ENCODE measurements at regions of chr20 and their contacts with region 1.

Region 1: DNA sequence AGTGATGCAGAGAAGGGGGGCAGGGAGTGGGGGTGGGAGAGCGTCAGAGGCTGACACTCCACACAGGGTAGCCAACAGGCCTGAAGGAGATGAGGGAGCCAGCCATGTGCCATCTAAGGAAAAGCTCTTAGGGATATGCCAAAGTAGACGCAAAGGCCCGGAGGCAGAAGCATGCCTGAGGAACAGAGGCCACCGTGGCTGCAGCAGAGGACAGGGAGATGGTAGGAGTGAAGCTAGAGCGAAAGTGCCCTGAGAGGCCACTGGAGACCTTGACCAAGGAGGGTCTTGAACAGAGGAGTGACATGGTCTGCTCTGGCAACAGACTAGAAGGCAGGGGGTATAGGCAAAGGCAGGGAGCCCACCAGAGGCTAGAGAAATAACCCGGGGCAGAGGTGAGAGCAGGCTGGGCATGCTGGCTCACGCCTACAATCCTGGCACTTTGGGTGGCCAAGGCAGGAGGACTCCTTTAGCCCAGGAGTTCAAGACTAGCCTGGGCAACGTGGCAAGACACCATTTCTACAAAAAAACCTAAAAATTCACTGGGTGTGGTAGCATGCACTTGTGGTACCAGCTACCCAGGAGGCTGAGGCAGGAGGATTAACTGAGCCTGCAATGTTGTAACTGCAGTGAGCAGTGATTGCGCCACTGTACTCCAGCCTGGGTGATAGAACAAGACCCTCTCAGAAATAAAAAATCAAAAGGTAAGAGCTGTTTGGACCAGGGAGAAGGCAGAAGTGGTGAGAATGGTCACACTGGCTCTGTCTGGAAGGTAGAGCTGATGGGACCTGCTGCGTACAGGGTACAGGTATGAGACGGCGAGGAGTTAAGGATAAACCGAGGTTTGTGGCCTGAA is 6.3 kb downstream of the RRBP1 start:
- DNase-seq: no peak
- H3K4me3 ChIP-seq: no peak overlapping the region
- H3K27ac ChIP-seq: no peak overlapping the region
- H3K4me1 ChIP-seq: peaks cover 21% of the 10 kb centered on the region
- H3K27me3 ChIP-seq: no peaks in the 10 kb centered on the region
- CTCF ChIP-seq: no peak

Region 2: GRCh38 chr20:17497821-17498580 is 177.8 kb before region 1 on chr20:
- CTCF ChIA-PET with region 1: interaction called, 12 read pairs
- POLR2A ChIA-PET with region 1: no interaction called
- intact Hi-C with region 1: no loop called
- DNase-seq: no peak
- H3K4me3 ChIP-seq: no peak overlapping the region
- H3K27ac ChIP-seq: no peak overlapping the region
- H3K4me1 ChIP-seq: peaks cover 8% of the 10 kb centered on the region
- H3K27me3 ChIP-seq: peaks cover 7% of the 10 kb centered on the region
- CTCF ChIP-seq: no peak

Region 3: DNA sequence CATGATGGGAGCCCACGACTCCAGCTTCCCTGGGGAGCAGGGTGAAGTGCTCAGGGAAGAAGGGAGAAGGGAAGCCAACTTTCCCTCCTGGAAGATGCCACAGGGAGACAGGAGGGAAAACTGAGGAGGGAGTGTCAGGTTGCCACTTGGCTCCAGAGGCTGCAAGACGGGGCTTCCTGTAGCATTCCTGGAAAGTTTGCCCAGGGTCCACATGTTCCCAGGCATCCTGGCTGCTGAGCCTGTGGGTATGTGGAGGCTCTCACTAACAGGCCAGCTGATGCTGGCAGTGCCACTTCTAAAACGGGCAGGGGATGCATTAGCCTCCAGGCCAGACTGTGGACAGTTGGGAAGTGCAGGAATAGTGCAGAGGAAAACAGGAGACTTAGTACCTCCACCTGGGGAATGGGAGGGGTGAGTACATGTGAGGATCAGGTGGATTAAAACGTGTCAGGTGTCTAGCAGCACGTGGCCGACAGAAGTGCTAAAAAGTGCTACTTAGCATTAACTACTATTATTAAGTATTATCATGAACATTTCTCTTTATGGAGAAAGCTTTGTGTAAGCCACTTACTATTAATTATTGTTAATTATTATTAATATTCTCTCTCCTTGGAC is 57.3 kb after region 1 on chr20:
- CTCF ChIA-PET with region 1: no interaction called
- POLR2A ChIA-PET with region 1: no interaction called
- intact Hi-C with region 1: no loop called
- DNase-seq: no peak
- H3K4me3 ChIP-seq: no peak overlapping the region
- H3K27ac ChIP-seq: no peak overlapping the region
- H3K4me1 ChIP-seq: no peaks in the 10 kb centered on the region
- H3K27me3 ChIP-seq: peaks cover 6% of the 10 kb centered on the region; the same call in 1 of the 2 replicates
- CTCF ChIP-seq: no peak